ENCODE measurements at regions of chr17 and their contacts with region 1.

Region 1: DNA sequence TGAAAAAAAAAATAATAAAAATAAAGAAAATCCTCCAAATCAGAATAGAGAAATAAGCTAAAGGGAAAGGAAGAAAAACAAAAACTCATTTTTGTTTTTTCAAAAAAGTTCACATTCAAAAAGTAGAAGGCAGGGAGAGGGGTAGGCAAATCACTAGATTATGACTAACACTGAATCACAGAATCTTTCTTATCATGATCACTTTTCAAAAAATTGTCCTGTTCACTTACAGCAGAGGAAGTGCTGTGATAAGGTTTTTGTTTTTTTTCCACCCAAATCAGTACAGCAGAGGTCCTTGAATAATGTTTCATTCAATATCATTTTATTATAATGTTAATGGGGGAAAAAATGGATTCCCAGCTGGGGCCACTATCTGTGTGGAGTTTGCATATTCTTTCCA is 106.4 kb downstream of the CA4 start:
- DNase-seq: no peak
- ATAC-seq: no peak
- H3K4me3 ChIP-seq: no peak overlapping the region
- H3K27ac ChIP-seq: no peak overlapping the region
- H3K4me1 ChIP-seq: no peaks in the 10 kb centered on the region
- H3K27me3 ChIP-seq: no peaks in the 10 kb centered on the region
- CTCF ChIP-seq: no peak
- POLR2A ChIP-seq: no peak

Region 2: GRCh38 chr17:60169921-60170742 is 86.0 kb before region 1 on chr17:
- in situ Hi-C with region 1: loop called in 1 of 4 experiments (anchors 25 kb)
- intact Hi-C with region 1: no loop called
- DNase-seq: no peak
- ATAC-seq: peak; percentile 14 to 22
- H3K4me3 ChIP-seq: no peak overlapping the region
- H3K27ac ChIP-seq: peak overlapping the region in 3 of 4 donors; percentile 42 to 64 (median 48)
- H3K4me1 ChIP-seq: peaks cover 10 to 18% of the 10 kb centered on the region in 2 donors
- H3K27me3 ChIP-seq: peaks cover 0 to 5% (median 0%) of the 10 kb centered on the region in 3 donors
- CTCF ChIP-seq: peak in 1 of 5 experiments; percentile 7
- POLR2A ChIP-seq: no peak

Region 3: DNA sequence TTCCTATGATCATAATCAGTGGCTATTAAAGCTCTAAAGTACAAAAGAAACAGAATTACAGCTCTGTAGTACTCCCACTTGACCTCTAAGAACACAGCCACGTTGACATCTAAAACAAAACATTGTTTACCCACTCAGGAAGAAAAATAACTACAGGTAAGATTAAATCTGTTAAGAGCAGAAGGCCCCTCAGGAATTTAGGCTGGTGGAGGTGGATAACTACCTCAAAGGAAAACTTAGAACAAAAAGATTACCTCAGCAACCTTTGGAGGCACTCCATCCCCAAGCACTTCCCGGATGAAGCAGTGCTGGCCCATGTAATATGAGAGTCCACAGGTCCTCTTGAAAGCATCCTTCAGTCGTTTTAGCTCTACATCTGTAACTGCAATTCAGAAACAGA is 89.1 kb after region 1 on chr17:
- in situ Hi-C with region 1: no loop called
- intact Hi-C with region 1: no loop called
- DNase-seq: no peak
- ATAC-seq: no peak
- H3K4me3 ChIP-seq: no peak overlapping the region
- H3K27ac ChIP-seq: no peak overlapping the region
- H3K4me1 ChIP-seq: peaks cover 0 to under 1% of the 10 kb centered on the region in 2 donors
- H3K27me3 ChIP-seq: no peaks in the 10 kb centered on the region
- CTCF ChIP-seq: no peak
- POLR2A ChIP-seq: no peak